ENCODE measurements at regions of chr10 and their contacts with region 1.

Region 1: GRCh38 chr10:51926337-51926736 is 226.9 kb upstream of the CSTF2T start:
- DNase-seq: no peak
- H3K4me3 ChIP-seq: no peak overlapping the region
- H3K27ac ChIP-seq: no peak overlapping the region
- H3K27me3 ChIP-seq: no peaks in the 10 kb centered on the region
- CTCF ChIP-seq: no peak

Region 2: DNA sequence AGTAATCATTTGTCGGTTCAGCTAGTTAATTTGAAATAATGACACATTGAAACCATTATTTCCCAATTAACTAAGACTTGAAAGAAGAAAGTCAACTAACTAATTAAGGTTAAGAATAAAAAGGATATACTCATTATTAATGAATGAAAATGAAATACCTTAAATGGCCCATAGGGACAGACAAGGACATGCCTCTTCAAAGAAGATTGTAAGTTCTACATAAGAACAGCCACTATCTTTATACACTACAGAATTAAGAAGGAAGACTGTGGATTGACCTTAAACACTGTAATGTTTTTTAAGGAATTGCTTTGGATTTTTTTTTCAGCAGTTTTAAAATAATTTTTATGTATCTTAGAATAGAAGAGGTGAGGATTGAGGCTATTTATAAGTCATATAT is 287.6 kb before region 1 on chr10:
- CTCF ChIA-PET with region 1: interaction called, 13 read pairs
- POLR2A ChIA-PET with region 1: no interaction called
- DNase-seq: no peak
- H3K4me3 ChIP-seq: no peak overlapping the region
- H3K27ac ChIP-seq: no peak overlapping the region
- H3K27me3 ChIP-seq: no peaks in the 10 kb centered on the region
- CTCF ChIP-seq: no peak

Measured in AG04450 (cell line).